H1 (cell line): ENCODE measurements at regions of chr10 and their contacts with region 1.

Region 1: DNA sequence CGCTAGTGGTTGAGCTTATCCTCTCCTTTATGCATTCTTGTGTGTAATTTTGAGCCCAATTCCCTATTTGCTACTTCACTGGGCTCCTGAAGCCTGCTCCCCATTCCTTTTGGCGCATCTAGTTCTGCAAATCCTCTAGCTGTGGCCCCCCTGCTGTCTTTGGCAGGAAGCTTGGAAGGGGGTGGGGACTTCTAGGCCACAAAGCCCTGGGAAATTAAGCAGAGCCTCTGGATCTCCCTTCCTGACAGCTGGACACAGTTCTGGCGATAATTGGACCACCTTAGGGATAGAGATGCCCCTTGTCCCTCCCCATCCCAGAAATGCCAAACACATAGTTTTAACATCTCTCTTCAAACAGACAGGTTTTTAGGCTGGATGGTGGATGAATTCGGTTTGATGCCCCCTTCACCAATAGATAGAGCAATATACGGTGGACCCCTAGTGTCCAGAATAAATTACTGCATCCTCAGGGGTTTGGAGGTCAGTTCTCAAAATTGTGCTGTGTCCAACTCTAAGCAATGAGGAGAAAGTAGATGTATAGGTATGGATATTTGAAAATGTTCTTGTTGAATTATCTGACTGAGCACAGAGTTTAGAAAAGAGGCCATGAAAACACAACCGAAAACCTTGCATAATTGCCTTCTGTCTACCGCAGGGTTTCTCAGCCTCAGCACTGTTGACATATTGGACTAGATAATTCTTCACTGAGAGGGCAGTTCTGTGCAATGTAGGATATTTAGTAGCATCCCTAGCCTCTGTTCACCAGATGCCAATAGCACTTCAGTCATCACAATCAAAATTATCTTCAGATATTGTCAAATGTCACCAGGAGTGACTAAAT is 75.5 kb downstream of the PAPSS2 start:
- DNase-seq: peak; percentile 23 to 82
- H3K4me3 ChIP-seq: peak overlapping the region in 3 of 4 experiments; percentile 9 to 49 (median 20); a peak in 5 of 8 replicates
- H3K27ac ChIP-seq: 0 out of 2 replicates have a peak overlapping the region, but pooled peaks have one; percentile 37
- H3K4me1 ChIP-seq: peaks cover 0 to 8% (median 2%) of the 10 kb centered on the region in 4 experiments; a peak in 3 of 7 replicates
- H3K27me3 ChIP-seq: no peaks in the 10 kb centered on the region
- CTCF ChIP-seq: peak in 2 of 3 experiments; percentile 48 to 74; a peak in 3 of 4 replicates
- EP300 ChIP-seq: no peak
- POLR2A ChIP-seq: no peak
- RAD21 ChIP-seq: peak; percentile 86 to 88

Region 2: DNA sequence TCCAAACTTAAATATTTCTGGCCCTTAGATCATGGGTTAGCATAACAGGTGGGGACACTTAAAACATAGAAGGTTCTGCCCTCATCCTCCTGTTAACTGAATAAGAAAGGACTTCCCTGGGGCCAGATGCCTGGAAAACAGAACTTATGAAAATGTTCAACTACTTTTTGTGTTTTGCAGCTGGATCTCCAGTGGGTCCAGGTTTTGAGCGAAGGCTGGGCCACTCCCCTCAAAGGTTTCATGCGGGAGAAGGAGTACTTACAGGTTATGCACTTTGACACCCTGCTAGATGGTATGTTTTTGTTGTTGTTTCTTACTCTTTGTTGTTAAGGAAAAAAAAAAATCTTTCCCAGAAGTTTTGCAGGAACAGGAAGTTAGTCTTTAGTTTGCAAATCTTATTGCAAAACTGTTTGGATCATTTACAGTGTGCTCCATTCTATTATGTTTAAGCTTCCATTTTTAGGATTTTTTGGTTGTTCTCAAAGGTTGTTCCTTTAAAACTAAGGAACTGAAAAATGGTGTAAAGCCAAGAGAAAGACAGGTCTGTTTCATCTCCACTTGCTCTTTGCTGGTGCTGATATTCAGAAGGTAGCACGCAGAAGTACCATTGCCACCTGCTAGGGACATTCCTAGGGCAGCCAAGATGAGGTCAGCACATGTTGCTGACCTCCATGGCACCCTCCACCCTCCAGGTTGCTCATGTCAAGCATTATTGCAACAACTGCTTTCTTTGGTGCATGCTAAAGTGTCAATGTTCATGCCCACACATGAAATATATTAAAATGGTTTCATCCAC is 19.5 kb before region 1 on chr10:
- CTCF ChIA-PET with region 1: interaction called, 10 read pairs
- POLR2A ChIA-PET with region 1: no interaction called
- DNase-seq: no peak
- H3K4me3 ChIP-seq: no peak overlapping the region
- H3K27ac ChIP-seq: no peak overlapping the region
- H3K4me1 ChIP-seq: no peaks in the 10 kb centered on the region
- H3K27me3 ChIP-seq: no peaks in the 10 kb centered on the region
- CTCF ChIP-seq: no peak
- EP300 ChIP-seq: no peak
- POLR2A ChIP-seq: no peak
- RAD21 ChIP-seq: no peak

Region 3: GRCh38 chr10:87750001-87750671 is 14.9 kb after region 1 on chr10:
- CTCF ChIA-PET with region 1: interaction called, 10 read pairs
- POLR2A ChIA-PET with region 1: interaction called, 3 read pairs
- DNase-seq: no peak
- H3K4me3 ChIP-seq: no peak overlapping the region
- H3K27ac ChIP-seq: no peak overlapping the region
- H3K4me1 ChIP-seq: peaks cover 0 to 7% (median 3%) of the 10 kb centered on the region in 4 experiments; a peak in 5 of 7 replicates
- H3K27me3 ChIP-seq: no peaks in the 10 kb centered on the region
- CTCF ChIP-seq: no peak
- EP300 ChIP-seq: no peak
- POLR2A ChIP-seq: no peak; a peak in 1 of 3 replicates
- RAD21 ChIP-seq: no peak

Region 4: GRCh38 chr10:87794285-87794684 is 59.1 kb after region 1 on chr10:
- CTCF ChIA-PET with region 1: no interaction called
- POLR2A ChIA-PET with region 1: no interaction called
- DNase-seq: no peak
- H3K4me3 ChIP-seq: no peak overlapping the region
- H3K27ac ChIP-seq: no peak overlapping the region
- H3K4me1 ChIP-seq: peaks cover 0 to 5% (median 0%) of the 10 kb centered on the region in 4 experiments; a peak in 2 of 7 replicates
- H3K27me3 ChIP-seq: no peaks in the 10 kb centered on the region
- CTCF ChIP-seq: no peak
- EP300 ChIP-seq: no peak
- POLR2A ChIP-seq: no peak
- RAD21 ChIP-seq: no peak